Activated T-helper 2 cell treated with anti-CD3 and anti-CD28 coated beads, Interferon-gamma antibody, Interleukin-2, Interleukin-4, amounts not matched to agents 10 μg/mL and 5 μg/mL and 100 μg/mL, durations not matched to agents 14 hours and 24 hours and 36 hours (primary cell): ENCODE measurements at regions of chr4 and their contacts with region 1.

Region 1: GRCh38 chr4:185343726-185344581 is 51.8 kb downstream of the LRP2BP start:
- DNase-seq: no peak
- H3K4me3 Mint-ChIP-seq: no peak overlapping the region
- H3K27ac Mint-ChIP-seq: peak overlapping the region; percentile 86
- H3K4me1 Mint-ChIP-seq: peaks cover 44% of the 10 kb centered on the region
- H3K27me3 Mint-ChIP-seq: no peaks in the 10 kb centered on the region

Region 2: DNA sequence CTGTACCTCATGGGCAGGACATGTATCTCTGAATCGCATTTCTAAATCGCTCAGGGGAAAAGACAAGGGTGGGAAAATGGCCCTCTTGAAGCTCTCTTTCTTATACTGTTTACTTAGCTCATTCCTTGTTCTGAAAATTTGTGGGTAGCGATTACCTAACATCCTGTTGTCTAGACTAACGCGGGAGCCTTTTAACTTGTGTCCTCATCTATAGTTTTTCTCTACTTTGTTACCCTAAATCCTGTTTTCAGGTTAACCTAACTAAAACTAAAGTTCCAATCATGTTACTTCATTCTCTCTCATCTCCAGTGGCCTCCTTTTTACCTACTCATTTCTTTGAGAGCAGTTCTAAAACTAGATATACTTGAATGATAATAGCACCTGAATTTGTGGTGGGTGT is 89.5 kb before region 1 on chr4:
- intact Hi-C with region 1: loop called (anchors 10 kb)
- DNase-seq: no peak
- H3K4me3 Mint-ChIP-seq: no peak overlapping the region
- H3K27ac Mint-ChIP-seq: peak overlapping the region; percentile 1
- H3K4me1 Mint-ChIP-seq: peaks cover 33% of the 10 kb centered on the region
- H3K27me3 Mint-ChIP-seq: no peaks in the 10 kb centered on the region

Region 3: DNA sequence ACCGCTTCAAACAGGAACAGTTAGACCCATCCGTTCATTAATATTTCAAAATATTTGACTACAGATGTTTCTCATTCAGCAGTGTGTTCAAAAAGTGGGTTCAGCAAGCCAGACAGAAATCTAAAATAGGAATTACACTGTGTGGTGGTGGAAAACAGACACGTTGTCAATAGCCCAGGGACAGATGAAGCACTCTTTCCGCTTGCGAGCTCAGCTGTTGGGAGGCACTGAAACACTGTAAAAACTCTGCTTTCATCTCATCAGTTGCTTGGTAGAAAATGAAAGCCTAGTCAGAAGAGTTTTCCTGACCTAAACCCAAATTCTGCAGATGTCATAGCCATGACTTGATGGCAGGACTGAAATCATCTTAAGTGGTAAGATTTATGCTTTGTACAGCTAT is 13.3 kb after region 1 on chr4:
- intact Hi-C with region 1: loop called (anchors 2 kb)
- DNase-seq: no peak
- H3K4me3 Mint-ChIP-seq: no peak overlapping the region
- H3K27ac Mint-ChIP-seq: peak overlapping the region; percentile 50
- H3K4me1 Mint-ChIP-seq: peaks cover 9% of the 10 kb centered on the region
- H3K27me3 Mint-ChIP-seq: no peaks in the 10 kb centered on the region